ENCODE measurements at regions of chr14 and their contacts with region 1.

Region 1: GRCh38 chr14:26598081-26598795 is 405 bp upstream of the NOVA1 start:
- DNase-seq: peak; percentile 89
- H3K4me3 ChIP-seq: peak overlapping the region; percentile 78
- H3K27ac ChIP-seq: peak overlapping the region; percentile 43
- H3K4me1 ChIP-seq: peaks cover 21% of the 10 kb centered on the region
- H3K27me3 ChIP-seq: peaks cover 15% of the 10 kb centered on the region
- CTCF ChIP-seq: no peak

Region 2: GRCh38 chr14:26281280-26281992 is 316.8 kb before region 1 on chr14:
- CTCF ChIA-PET with region 1: no interaction called
- POLR2A ChIA-PET with region 1: no interaction called
- intact Hi-C with region 1: no loop called
- DNase-seq: peak; percentile 44
- H3K4me3 ChIP-seq: no peak overlapping the region
- H3K27ac ChIP-seq: no peak overlapping the region
- H3K4me1 ChIP-seq: no peaks in the 10 kb centered on the region
- H3K27me3 ChIP-seq: no peaks in the 10 kb centered on the region
- CTCF ChIP-seq: no peak

Region 3: DNA sequence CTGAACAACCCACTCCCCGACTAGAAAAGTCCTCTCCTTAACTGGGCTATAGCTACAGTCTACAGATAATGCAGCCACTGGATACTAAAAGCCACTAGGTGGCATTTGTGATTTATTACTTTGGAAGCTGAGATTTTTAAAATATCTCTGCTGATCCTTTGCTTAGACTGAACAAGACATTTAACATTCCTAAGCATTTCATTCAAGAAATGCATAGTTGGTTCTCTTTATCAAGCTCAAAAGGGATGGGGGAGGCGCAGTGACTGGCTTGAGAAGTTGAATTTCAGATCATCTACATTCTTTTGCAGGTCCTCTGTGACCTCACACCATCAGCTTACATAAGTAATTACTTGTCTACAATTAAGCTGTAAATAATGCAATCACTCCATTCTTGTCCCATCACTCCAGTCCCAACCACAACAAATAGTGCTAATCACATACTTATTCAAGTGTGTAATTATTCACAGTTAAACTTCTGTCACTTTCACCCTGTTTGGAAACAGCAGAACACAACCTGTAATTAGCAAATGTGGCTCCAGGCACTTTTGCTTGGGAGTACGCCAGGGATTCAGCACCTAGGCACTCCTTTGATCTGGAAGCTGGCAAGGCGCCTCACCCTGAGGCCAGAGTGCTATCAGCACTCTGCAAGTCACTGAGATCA is 204.0 kb before region 1 on chr14:
- CTCF ChIA-PET with region 1: no interaction called
- POLR2A ChIA-PET with region 1: no interaction called
- intact Hi-C with region 1: loop called (anchors 5 kb)
- DNase-seq: peak; percentile 33
- H3K4me3 ChIP-seq: no peak overlapping the region
- H3K27ac ChIP-seq: no peak overlapping the region
- H3K4me1 ChIP-seq: peaks cover 21% of the 10 kb centered on the region
- H3K27me3 ChIP-seq: peaks cover 42% of the 10 kb centered on the region
- CTCF ChIP-seq: peak; percentile 55

Region 4: DNA sequence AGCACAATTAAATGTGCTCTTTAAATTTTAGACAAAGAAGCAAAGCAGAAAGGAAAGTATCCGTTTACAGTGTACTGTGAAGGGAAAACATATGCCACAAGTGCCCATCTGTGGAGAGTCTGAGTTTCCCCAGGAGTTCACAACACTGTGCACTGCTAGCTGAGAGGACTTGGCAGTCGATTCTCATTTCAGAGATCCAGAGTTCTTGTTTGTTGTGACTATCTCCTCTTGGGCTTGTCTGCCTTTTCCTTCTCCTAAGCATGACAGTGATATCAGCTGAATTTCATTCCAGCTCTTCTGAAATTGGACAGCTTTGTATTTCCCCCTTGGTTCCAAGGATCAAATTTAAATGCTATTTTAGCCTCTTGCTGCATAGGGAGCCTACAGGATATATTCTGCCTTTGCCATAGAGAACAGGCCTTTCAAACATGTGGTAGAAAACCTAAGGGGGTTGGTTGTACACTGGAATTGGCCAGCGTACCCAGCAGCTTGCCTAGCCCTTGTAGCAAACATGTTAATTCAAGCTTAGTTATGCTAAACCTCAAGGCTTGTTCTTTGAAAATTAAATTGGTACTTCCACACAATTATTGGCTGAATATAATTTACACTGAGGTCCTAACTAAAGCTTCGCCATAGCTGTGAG is 258.8 kb after region 1 on chr14:
- CTCF ChIA-PET with region 1: no interaction called
- POLR2A ChIA-PET with region 1: no interaction called
- intact Hi-C with region 1: no loop called
- DNase-seq: no peak
- H3K4me3 ChIP-seq: no peak overlapping the region
- H3K27ac ChIP-seq: no peak overlapping the region
- H3K4me1 ChIP-seq: no peaks in the 10 kb centered on the region
- H3K27me3 ChIP-seq: no peaks in the 10 kb centered on the region
- CTCF ChIP-seq: no peak

Region 5: GRCh38 chr14:26947265-26947664 is 349.0 kb after region 1 on chr14:
- CTCF ChIA-PET with region 1: no interaction called
- POLR2A ChIA-PET with region 1: no interaction called
- intact Hi-C with region 1: no loop called
- DNase-seq: no peak
- H3K4me3 ChIP-seq: no peak overlapping the region
- H3K27ac ChIP-seq: no peak overlapping the region
- H3K4me1 ChIP-seq: no peaks in the 10 kb centered on the region
- H3K27me3 ChIP-seq: no peaks in the 10 kb centered on the region
- CTCF ChIP-seq: no peak

Region 6: GRCh38 chr14:26966908-26967307 is 368.7 kb after region 1 on chr14:
- CTCF ChIA-PET with region 1: no interaction called
- POLR2A ChIA-PET with region 1: no interaction called
- intact Hi-C with region 1: no loop called
- DNase-seq: no peak
- H3K4me3 ChIP-seq: no peak overlapping the region
- H3K27ac ChIP-seq: no peak overlapping the region
- H3K4me1 ChIP-seq: no peaks in the 10 kb centered on the region
- H3K27me3 ChIP-seq: no peaks in the 10 kb centered on the region
- CTCF ChIP-seq: no peak